ENCODE measurements at regions of chr1 and their contacts with region 1.

Region 1: GRCh38 chr1:32870615-32871363 is at the start of gene FNDC5:
- DNase-seq: no peak
- ATAC-seq: no peak
- H3K4me3 Mint-ChIP-seq: peak within 1 kb of the TSS; percentile 75
- H3K27ac Mint-ChIP-seq: no peak within 1 kb of the TSS
- H3K4me1 Mint-ChIP-seq: peaks cover 34% of the 10 kb centered on the region
- H3K27me3 Mint-ChIP-seq: peaks cover 37% of the 10 kb centered on the region
- CTCF ChIP-seq: no peak
- total RNA-seq, gene FNDC5: 0.55 and 1.4 TPM in 2 replicates

Region 2: GRCh38 chr1:32400876-32401631 is 469.7 kb before region 1 on chr1:
- CTCF ChIA-PET with region 1: no interaction called
- POLR2A ChIA-PET with region 1: no interaction called
- intact Hi-C with region 1: loop called (anchors 1 kb)
- DNase-seq: peak; percentile 51
- ATAC-seq: peak; percentile 83
- H3K4me3 Mint-ChIP-seq: no peak overlapping the region
- H3K27ac Mint-ChIP-seq: no peak overlapping the region
- H3K4me1 Mint-ChIP-seq: peaks cover 4% of the 10 kb centered on the region
- H3K27me3 Mint-ChIP-seq: no peaks in the 10 kb centered on the region
- CTCF ChIP-seq: peak; percentile 53

Region 3: GRCh38 chr1:32521165-32521564 is 349.6 kb before region 1 on chr1:
- CTCF ChIA-PET with region 1: interaction called, 5 read pairs
- POLR2A ChIA-PET with region 1: no interaction called
- intact Hi-C with region 1: loop called (anchors 1 kb)
- DNase-seq: no peak
- ATAC-seq: no peak
- H3K4me3 Mint-ChIP-seq: peak overlapping the region; percentile 82
- H3K27ac Mint-ChIP-seq: no peak overlapping the region
- H3K4me1 Mint-ChIP-seq: peaks cover 5% of the 10 kb centered on the region
- H3K27me3 Mint-ChIP-seq: no peaks in the 10 kb centered on the region
- CTCF ChIP-seq: no peak

Region 4: GRCh38 chr1:32716312-32717148 is 154.3 kb before region 1 on chr1:
- CTCF ChIA-PET with region 1: interaction called, 29 read pairs
- POLR2A ChIA-PET with region 1: no interaction called
- intact Hi-C with region 1: loop called (anchors 1 kb)
- DNase-seq: no peak
- ATAC-seq: peak; percentile 68
- H3K4me3 Mint-ChIP-seq: no peak overlapping the region
- H3K27ac Mint-ChIP-seq: no peak overlapping the region
- H3K4me1 Mint-ChIP-seq: peaks cover 7% of the 10 kb centered on the region
- H3K27me3 Mint-ChIP-seq: peaks cover 19% of the 10 kb centered on the region
- CTCF ChIP-seq: no peak

Region 5: GRCh38 chr1:32801096-32801715 is 69.6 kb before region 1 on chr1:
- CTCF ChIA-PET with region 1: no interaction called
- POLR2A ChIA-PET with region 1: no interaction called
- intact Hi-C with region 1: loop called (anchors 5 kb)
- DNase-seq: no peak
- ATAC-seq: peak; percentile 25
- H3K4me3 Mint-ChIP-seq: no peak overlapping the region
- H3K27ac Mint-ChIP-seq: peak overlapping the region; percentile 37
- H3K4me1 Mint-ChIP-seq: peaks cover 42% of the 10 kb centered on the region
- H3K27me3 Mint-ChIP-seq: no peaks in the 10 kb centered on the region
- CTCF ChIP-seq: no peak